HepG2 (cell line): ENCODE measurements at regions of chr12 and their contacts with region 1.

Region 1: DNA sequence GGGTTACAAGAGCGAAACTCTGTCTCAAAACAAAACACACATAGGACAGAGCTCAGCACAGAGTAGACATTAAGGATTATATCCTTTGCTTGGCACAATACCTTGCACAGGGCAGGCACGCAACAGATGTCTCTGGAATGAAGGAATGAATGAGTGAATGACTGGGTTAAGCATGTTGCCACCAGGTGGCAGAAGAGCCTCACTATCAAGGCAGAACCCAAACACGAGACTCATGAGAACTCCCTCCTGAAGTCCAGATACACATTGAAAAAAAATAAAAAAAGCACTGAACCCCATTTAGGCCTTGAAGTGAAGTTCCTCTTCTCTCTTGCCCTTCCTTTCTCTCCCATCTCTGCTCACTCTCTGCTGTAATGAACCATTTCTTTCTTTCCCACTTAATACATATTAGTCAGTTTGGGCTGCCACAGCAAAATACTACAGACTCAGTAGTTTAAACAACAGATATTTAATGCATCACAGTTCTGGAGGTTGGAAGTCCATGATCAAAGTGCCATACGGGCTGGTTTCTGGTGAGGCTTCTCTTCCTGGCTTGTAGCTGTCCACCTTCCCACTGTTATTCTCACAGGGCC is 26.6 kb upstream of the LTA4H start:
- DNase-seq: peak; percentile 54
- ATAC-seq: peak; percentile 90
- H3K4me3 ChIP-seq: no peak overlapping the region
- H3K27ac ChIP-seq: no peak overlapping the region
- H3K4me1 ChIP-seq: no peaks in the 10 kb centered on the region
- H3K27me3 ChIP-seq: peaks cover 0 to 13% of the 10 kb centered on the region in 2 experiments; a peak in 2 of 5 replicates
- CTCF ChIP-seq: peak; percentile 88
- EP300 ChIP-seq: no peak
- POLR2A ChIP-seq: no peak
- RAD21 ChIP-seq: peak; percentile 72

Region 2: DNA sequence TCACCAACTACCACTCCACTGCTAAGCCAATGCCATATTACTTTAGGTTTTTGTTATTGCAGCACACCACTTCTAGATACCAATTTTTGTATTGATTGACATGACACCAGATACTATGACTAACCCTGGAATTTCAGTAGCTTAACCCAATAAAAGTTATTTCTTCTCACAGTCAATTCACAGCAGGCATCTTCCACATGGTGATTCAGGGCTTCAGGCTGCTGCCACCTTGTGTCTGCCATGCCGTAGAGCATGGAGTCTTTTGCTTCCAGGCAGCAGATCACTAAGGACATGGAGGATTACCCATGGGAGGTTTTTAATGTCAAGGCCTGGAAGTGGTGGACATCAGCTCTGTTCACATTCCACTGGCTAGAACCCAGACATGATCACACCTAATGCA is 29.9 kb after region 1 on chr12:
- CTCF ChIA-PET with region 1: no interaction called
- POLR2A ChIA-PET with region 1: no interaction called
- in situ Hi-C with region 1: no loop called
- intact Hi-C with region 1: loop called (anchors 1 kb)
- DNase-seq: peak; percentile 18
- ATAC-seq: peak; percentile 80
- H3K4me3 ChIP-seq: no peak overlapping the region
- H3K27ac ChIP-seq: no peak overlapping the region
- H3K4me1 ChIP-seq: no peaks in the 10 kb centered on the region
- H3K27me3 ChIP-seq: peaks cover 0 to 4% of the 10 kb centered on the region in 2 experiments; a peak in 1 of 5 replicates
- CTCF ChIP-seq: peak; percentile 52
- EP300 ChIP-seq: no peak
- POLR2A ChIP-seq: no peak
- RAD21 ChIP-seq: no peak

Region 3: DNA sequence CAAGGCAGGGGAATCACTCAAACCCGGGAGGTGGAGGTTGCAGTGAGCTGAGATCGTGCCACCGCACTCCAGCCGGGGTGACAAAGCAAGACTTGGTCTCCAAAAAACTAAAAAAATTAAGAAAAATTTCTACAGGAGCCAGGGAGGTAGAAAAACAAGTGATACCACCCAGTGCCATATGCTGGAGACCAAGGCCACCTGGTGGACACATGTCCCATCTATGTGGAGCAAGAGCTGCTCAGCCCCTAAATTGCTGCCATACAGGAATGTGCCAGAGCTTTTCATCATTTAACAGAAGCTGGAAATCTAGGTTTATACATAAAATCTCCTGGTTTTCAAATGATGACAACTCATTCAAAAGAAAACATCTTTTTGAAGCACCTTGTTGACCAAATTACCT is 70.9 kb after region 1 on chr12:
- CTCF ChIA-PET with region 1: interaction called, 10 read pairs
- POLR2A ChIA-PET with region 1: no interaction called
- in situ Hi-C with region 1: no loop called
- intact Hi-C with region 1: loop called (anchors 1 kb)
- DNase-seq: peak; percentile 38
- ATAC-seq: peak; percentile 95
- H3K4me3 ChIP-seq: no peak overlapping the region
- H3K27ac ChIP-seq: no peak overlapping the region
- H3K4me1 ChIP-seq: 0 out of 2 replicates have a peak, but pooled peaks cover 5% of the 10 kb centered on the region
- H3K27me3 ChIP-seq: peaks cover 0 to 11% of the 10 kb centered on the region in 2 experiments; a peak in 1 of 5 replicates
- CTCF ChIP-seq: peak; percentile 54
- EP300 ChIP-seq: no peak
- POLR2A ChIP-seq: no peak
- RAD21 ChIP-seq: 0 out of 2 replicates have a peak, but pooled peaks have one; percentile 14

Region 4: DNA sequence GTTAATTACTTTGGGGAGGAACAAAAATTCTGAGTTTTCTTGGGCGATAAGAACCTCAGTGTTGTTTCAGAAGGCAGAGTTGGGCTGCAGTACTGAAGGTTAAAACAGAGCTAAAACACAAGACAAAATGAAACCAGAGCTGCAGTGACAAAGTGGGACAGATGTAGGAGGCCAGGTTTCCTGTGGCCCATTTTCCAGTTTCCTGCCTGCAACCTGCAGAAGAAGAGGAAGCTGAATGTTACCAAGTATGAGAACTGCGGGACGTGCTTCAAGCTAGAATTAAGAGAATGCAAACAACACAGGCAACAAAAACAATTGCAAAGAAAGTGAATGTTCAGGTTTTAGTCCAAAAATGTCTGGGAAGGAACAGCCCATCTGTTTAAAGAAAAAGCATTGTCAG is 150.0 kb after region 1 on chr12:
- CTCF ChIA-PET with region 1: interaction called, 33 read pairs
- POLR2A ChIA-PET with region 1: no interaction called
- in situ Hi-C with region 1: loop called (anchors 5 kb)
- intact Hi-C with region 1: loop called (anchors 1 kb)
- DNase-seq: no peak
- ATAC-seq: no peak
- H3K4me3 ChIP-seq: no peak overlapping the region
- H3K27ac ChIP-seq: no peak overlapping the region
- H3K4me1 ChIP-seq: peaks cover 30% of the 10 kb centered on the region
- H3K27me3 ChIP-seq: peaks cover 0 to 1% of the 10 kb centered on the region in 2 experiments; a peak in 1 of 5 replicates
- CTCF ChIP-seq: no peak
- EP300 ChIP-seq: no peak
- POLR2A ChIP-seq: no peak
- RAD21 ChIP-seq: no peak

Region 5: DNA sequence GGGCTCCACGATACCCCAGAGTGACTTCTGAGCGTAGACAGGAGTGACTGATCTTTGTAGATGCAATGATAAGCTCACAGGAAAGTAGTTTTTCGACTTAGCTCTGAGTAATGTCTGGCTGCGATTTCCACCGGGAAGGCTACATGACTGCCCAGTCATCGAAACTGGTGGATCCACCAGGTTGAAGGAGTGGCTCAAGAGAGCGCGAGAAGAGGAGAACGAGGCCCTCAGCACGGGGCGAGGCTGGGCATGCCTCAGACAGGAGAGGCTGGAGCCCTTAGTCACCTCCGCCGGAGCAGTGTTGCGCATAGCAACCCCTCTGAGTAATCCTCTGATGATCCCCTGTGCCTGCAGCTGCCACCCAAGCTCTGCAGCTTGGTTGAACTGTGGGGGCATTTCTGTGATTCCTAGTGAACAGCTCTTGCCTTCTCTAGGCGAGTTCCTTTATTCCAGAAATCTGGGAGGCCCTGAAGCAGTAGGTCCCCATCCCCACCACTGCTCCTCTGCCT is 157.8 kb after region 1 on chr12:
- CTCF ChIA-PET with region 1: interaction called, 33 read pairs
- POLR2A ChIA-PET with region 1: no interaction called
- in situ Hi-C with region 1: loop called (anchors 5 kb)
- intact Hi-C with region 1: loop called (anchors 1 kb)
- DNase-seq: peak; percentile 50
- ATAC-seq: peak; percentile 60
- H3K4me3 ChIP-seq: peak overlapping the region; percentile 19 to 47 (median 29); a peak in 4 of 6 replicates
- H3K27ac ChIP-seq: peak overlapping the region; percentile 60
- H3K4me1 ChIP-seq: peaks cover 68% of the 10 kb centered on the region
- H3K27me3 ChIP-seq: no peaks in the 10 kb centered on the region
- CTCF ChIP-seq: no peak
- EP300 ChIP-seq: no peak
- POLR2A ChIP-seq: no peak
- RAD21 ChIP-seq: no peak

Region 6: GRCh38 chr12:96399919-96400797 is 338.2 kb after region 1 on chr12 and contains the start of gene CDK17:
- CTCF ChIA-PET with region 1: no interaction called
- POLR2A ChIA-PET with region 1: no interaction called
- in situ Hi-C with region 1: no loop called
- intact Hi-C with region 1: loop called (anchors 5 kb)
- DNase-seq: peak; percentile 71
- ATAC-seq: peak; percentile 78
- H3K4me3 ChIP-seq: peak within 1 kb of the TSS; percentile 83 to 89 (median 83)
- H3K27ac ChIP-seq: peak within 1 kb of the TSS; percentile 98
- H3K4me1 ChIP-seq: peaks cover 30% of the 10 kb centered on the region
- H3K27me3 ChIP-seq: peaks cover 0 to 3% of the 10 kb centered on the region in 2 experiments; a peak in 1 of 5 replicates
- CTCF ChIP-seq: peak; percentile 53
- EP300 ChIP-seq: no peak
- POLR2A ChIP-seq: peak; percentile 59 to 77
- RAD21 ChIP-seq: 0 out of 2 replicates have a peak, but pooled peaks have one; percentile 47
- total RNA-seq, gene CDK17: 20.1 and 22.3 TPM in 2 replicates

Region 7: GRCh38 chr12:96516472-96517430 is 454.8 kb after region 1 on chr12:
- CTCF ChIA-PET with region 1: interaction called, 16 read pairs
- POLR2A ChIA-PET with region 1: no interaction called
- in situ Hi-C with region 1: loop called (anchors 10 kb)
- intact Hi-C with region 1: loop called (anchors 1 kb)
- DNase-seq: peak; percentile 43
- ATAC-seq: peak; percentile 59; the same call in 2 of the 3 replicates
- H3K4me3 ChIP-seq: no peak overlapping the region
- H3K27ac ChIP-seq: no peak overlapping the region
- H3K4me1 ChIP-seq: no peaks in the 10 kb centered on the region
- H3K27me3 ChIP-seq: peaks cover 1 to 4% of the 10 kb centered on the region in 2 experiments; a peak in 1 of 5 replicates
- CTCF ChIP-seq: peak; percentile 78
- EP300 ChIP-seq: no peak
- POLR2A ChIP-seq: no peak
- RAD21 ChIP-seq: peak; percentile 63; the same call in 1 of the 2 replicates